ENCODE measurements at regions of chr12 and their contacts with region 1.

Region 1: DNA sequence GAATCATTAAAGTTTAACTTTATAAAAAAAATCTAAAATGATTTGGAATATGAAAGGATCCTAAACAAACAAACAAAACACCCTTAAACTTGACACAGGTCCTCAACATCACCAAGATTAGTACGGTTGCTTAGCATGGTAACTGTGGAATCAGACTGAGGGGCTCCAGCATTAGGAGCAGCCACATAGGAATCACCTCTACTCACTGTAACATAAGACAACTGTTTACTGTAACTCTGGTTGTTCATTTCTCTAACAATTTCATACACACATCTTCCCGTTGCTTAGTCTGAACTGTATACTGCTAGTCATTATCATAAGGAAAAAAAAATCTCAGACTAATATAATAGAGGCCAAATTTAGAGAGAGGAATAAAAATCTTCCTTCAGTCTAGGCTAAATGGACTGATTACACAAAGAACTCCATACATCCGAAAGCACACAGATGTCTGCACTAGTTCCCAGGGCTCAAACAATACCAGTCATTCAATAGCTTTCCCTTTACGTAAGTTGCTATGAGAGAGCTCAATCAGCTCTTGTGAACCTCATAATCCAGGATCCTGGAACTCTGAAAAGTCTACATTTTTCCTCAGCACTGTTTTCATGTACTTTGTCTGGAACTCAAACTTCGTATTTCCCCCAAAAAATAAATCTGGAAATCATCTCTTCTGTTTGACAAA is 26.0 kb downstream of the LRP6 start:
- DNase-seq: peak; percentile 80
- H3K4me3 ChIP-seq: peak overlapping the region; percentile 29
- H3K27ac ChIP-seq: peak overlapping the region; percentile 75
- H3K4me1 ChIP-seq: peaks cover 50% of the 10 kb centered on the region
- H3K27me3 ChIP-seq: no peaks in the 10 kb centered on the region
- CTCF ChIP-seq: no peak

Region 2: DNA sequence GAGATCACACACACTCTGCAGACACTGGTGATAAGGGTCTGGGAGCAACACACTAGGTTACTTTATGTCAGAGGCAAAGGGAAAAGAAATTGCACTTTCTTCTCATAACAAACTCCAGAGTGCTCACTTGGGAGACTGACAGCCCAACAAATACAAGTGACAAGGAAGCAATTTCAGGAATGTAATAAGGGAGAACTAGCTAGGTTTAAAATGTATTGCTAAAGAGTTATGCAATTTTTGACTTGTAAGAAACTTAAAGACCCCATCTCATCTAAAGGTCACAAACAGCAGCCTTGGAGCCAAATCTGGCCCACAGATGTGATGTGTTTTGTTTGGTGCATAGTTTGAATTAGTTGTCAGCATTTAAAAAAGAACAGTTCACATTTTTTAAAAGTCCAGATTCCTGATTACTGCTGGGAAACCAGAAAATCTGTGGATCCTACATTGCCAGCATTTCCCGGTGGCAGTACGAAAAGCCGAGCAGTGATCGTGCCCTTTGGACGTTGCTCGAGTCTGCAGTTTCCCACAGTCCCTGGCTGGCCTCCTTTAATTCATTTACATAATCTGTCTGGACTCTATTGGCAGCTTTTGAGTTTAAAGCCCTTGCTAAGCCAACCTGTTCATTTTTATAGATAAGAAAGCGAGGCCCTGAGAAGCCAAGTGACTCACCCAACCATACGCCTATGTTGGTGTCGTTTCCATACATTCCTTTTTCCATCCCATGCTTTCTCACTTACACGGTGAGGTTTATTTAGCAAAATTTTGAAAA is 633.3 kb before region 1 on chr12:
- CTCF ChIA-PET with region 1: no interaction called
- POLR2A ChIA-PET with region 1: no interaction called
- intact Hi-C with region 1: loop called (anchors 10 kb)
- DNase-seq: no peak
- H3K4me3 ChIP-seq: no peak overlapping the region
- H3K27ac ChIP-seq: no peak overlapping the region
- H3K4me1 ChIP-seq: peaks cover 12% of the 10 kb centered on the region
- H3K27me3 ChIP-seq: no peaks in the 10 kb centered on the region
- CTCF ChIP-seq: no peak